ENCODE measurements at regions of chr14 and their contacts with region 1.

Region 1: GRCh38 chr14:102500158-102500662 is 9.4 kb downstream of the ANKRD9 start:
- DNase-seq: no peak
- ATAC-seq: no peak
- H3K4me3 Mint-ChIP-seq: no peak overlapping the region
- H3K27ac Mint-ChIP-seq: peak overlapping the region; percentile 80
- H3K4me1 Mint-ChIP-seq: no peaks in the 10 kb centered on the region
- H3K27me3 Mint-ChIP-seq: no peaks in the 10 kb centered on the region
- CTCF ChIP-seq: no peak

Region 2: DNA sequence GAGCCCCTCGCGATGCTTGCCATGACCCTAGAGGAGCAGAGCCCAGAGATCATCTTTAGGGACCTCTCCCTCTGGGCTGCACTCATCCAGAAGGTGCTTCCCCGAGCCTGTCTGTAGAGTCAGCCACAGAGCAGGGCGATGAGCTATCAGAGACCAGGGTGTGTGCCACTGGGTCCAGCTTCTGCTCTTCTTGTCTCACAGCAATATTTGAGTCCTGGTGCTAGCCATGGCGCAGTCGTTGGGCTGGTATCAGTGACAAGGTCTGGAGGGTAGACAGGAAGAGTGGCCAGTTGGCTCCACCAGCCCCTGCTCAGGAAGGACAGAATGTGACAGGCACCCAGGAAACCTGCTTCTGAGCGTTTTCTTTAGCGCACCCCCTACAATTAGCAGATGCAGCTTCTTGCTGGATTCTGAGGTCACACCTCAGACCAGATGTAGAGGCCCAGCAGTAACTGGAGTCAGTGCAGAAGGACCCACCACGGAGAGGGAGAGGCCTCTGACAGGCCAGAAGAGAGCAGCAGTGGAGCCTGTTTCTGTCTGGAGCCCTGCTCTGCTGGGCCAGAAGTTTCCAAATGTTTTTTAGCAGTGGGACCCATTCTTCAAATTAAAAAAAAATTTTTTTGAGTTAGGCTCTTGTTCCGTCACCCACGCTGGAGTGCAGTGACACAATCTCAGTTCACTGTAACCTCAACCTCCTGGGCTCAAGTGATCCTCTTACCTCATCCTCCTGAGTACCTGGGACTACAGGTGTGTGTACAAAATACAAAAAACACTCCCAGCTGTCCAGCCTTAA is 14.3 kb before region 1 on chr14:
- CTCF ChIA-PET with region 1: interaction called, 11 read pairs
- POLR2A ChIA-PET with region 1: no interaction called
- DNase-seq: no peak
- ATAC-seq: no peak
- H3K4me3 Mint-ChIP-seq: no peak overlapping the region
- H3K27ac Mint-ChIP-seq: peak overlapping the region; percentile 44; the same call in 1 of the 2 replicates
- H3K4me1 Mint-ChIP-seq: no peaks in the 10 kb centered on the region
- H3K27me3 Mint-ChIP-seq: no peaks in the 10 kb centered on the region
- CTCF ChIP-seq: no peak

Region 3: GRCh38 chr14:102568114-102568621 is 68.0 kb after region 1 on chr14:
- CTCF ChIA-PET with region 1: no interaction called
- POLR2A ChIA-PET with region 1: no interaction called
- DNase-seq: peak; percentile 66
- ATAC-seq: peak; percentile 96
- H3K4me3 Mint-ChIP-seq: peak overlapping the region; percentile 39; the same call in 1 of the 2 replicates
- H3K27ac Mint-ChIP-seq: peak overlapping the region; percentile 91
- H3K4me1 Mint-ChIP-seq: peaks cover 26% of the 10 kb centered on the region
- H3K27me3 Mint-ChIP-seq: peaks cover 6% of the 10 kb centered on the region; the same call in 1 of the 2 replicates
- CTCF ChIP-seq: no peak

Measured in WTC11 (cell line).